ENCODE measurements at regions of chr9 and their contacts with region 1.

Region 1: DNA sequence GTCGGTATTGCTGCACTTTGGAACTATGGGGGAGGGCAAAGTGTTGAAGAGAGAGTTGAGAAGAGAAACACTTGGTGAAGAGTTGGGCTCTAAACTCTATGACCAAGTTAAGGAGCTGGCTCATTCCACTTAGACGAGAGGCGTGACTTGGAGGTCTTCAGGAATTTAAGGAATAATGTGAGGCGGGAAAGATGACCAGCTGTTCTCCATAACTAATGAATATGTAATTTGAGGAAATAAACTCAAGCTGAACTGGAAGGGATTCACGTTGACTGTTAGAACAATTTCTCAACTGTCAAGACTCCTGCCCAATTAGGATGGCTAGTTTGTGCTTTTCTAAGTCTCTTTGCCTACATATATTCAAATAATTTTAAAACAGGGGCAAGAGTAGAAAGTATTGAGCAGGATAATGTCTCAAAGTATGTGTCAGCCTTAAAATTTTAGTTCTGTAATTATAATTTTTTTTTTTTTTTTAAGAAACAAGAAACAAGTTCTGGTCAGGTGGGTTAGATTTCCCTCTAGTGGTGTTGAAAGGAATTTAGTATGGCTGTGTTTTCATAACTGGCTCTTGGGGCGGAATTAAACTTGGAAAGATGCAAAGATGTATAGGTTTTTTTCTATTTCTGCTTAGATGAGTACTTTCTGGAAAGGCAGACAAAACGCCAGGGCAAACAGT is 33.4 kb downstream of the TMEM252 start:
- DNase-seq: no peak
- ATAC-seq: peak; percentile 64 to 77

Region 2: GRCh38 chr9:68416936-68417564 is 90.2 kb before region 1 on chr9:
- intact Hi-C with region 1: loop called in 1 of 2 experiments (anchors 10 kb)
- DNase-seq: no peak
- ATAC-seq: peak in 1 of 2 donors; percentile 29

Measured in left cardiac atrium (tissue), 4 donors.